ENCODE measurements at regions of chr16 and their contacts with region 1.

Region 1: DNA sequence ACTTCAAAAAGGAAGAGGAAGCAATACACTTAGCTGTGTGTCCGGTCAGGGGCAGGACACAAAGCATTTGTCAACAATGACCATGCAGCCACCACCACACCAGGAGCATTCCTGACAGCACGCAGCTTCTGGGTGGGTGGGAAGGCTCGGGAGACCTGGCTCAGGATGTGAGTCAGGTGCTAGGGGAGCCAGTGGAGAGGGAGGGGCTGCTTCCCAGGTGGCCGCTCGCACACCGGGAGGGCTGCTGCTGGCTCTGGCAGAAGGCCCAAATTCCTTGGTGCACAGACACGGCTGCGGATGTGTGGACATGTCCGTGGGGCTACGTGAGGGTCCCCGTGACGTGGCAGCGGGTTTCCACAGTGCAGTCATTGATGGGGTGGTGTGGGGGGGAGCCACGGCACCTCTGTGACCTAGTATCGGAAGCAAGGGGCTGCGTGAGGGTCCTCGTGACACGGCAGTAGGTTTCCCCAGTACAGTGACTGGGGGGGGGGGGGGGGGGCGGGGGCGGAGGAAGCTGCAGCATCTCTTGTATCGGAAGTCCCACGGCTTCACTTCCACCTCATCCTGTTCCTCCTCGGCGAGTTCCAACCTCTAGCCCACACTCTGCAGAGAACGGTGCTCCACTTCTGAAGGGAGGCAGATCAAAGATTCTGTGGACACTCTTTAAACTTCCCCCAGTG is 112.8 kb downstream of the ZNF778 start:
- DNase-seq: peak; percentile 94
- ATAC-seq: peak; percentile 83
- H3K4me3 ChIP-seq: peak overlapping the region; percentile 48; the same call in 1 of the 2 replicates
- H3K27ac ChIP-seq: peak overlapping the region; percentile 88
- H3K4me1 ChIP-seq: peaks cover 66% of the 10 kb centered on the region
- H3K27me3 ChIP-seq: no peaks in the 10 kb centered on the region
- CTCF ChIP-seq: no peak

Region 2: DNA sequence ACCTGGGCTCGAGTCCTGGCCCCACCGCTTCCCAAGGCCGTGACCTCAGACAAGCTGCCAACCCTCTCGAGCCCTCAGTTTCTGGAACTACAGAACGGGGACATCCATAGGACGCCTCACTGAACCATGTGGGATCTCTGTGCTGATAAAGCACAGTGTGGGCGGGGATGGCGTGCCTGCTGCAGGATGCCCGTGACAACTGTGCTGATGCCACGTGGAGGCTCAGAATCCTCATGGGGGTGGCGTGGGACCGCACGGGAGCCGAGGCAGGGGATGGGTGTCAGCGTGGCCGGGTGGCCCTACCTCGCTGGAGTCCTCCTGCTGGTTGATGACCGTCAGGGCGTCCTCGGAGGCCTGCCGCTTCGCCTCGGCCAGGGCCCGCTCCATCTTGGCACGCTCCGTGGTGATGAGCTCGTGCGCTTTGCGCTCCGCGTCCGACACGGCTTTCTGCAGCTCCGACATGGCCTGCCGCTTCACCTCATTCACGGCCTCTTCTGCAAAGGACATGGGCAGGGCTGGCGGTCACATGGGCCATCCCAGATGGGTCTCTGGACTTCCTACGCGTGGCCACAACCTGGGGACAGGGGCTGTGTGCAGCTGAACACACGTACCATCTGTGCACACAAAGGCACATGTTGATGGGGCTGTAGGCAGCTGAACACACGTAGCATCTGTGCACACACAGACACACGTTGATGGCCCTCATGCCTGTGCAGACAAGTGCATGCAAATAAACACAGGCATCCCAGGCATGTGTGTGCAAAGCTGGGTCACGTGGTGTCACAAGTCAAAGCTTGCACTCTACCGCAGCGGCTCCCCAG is 451.1 kb before region 1 on chr16:
- CTCF ChIA-PET with region 1: no interaction called
- POLR2A ChIA-PET with region 1: no interaction called
- intact Hi-C with region 1: no loop called
- DNase-seq: no peak
- ATAC-seq: no peak
- H3K4me3 ChIP-seq: no peak overlapping the region
- H3K27ac ChIP-seq: no peak overlapping the region
- H3K4me1 ChIP-seq: peaks cover 6% of the 10 kb centered on the region; the same call in 1 of the 2 replicates
- H3K27me3 ChIP-seq: no peaks in the 10 kb centered on the region
- CTCF ChIP-seq: no peak

Region 3: DNA sequence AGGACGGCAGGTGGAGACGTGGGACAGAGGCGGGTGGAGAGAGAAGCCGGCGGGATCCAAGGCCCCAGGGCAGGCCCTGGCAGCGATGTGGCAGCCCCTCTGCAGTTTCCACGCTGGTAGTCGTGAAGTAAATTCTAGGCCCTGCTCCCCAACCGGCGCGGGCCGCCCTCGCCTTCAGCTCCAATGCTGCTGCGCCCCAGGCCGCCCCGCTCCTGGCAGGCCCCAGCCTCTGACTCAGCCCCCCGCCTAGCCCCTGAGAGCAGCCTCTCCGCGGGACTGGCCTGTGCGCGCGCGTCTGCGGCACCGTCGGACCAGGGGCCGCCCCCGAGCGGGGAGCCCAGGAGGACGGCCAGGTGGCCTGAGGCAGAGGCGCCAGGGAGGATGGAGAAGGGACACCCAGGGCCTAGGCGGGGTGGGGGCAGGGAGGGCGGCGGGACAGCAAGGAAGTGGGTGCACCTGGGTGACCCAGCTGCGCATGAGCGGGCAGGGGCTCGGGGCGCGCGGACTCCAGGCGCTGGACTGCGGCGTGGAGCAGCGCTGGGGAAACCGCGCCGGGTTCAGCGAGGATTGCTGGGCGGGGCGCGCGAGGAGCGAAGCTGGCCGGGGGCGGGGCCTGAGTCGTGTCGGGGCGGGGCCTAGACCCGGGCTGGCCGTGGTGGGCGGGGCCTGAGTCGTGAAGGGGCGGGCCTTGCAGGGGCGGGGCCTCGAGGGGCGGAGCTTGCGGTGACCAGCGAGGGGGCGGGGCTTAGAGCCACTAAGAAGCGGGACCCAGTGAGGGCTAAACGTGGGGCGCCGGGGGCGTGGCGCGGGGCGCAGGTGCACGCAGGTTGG is 83.2 kb before region 1 on chr16:
- CTCF ChIA-PET with region 1: no interaction called
- POLR2A ChIA-PET with region 1: interaction called, 16 read pairs
- intact Hi-C with region 1: no loop called
- DNase-seq: peak; percentile 78
- ATAC-seq: peak; percentile 89
- H3K4me3 ChIP-seq: peak overlapping the region; percentile 73
- H3K27ac ChIP-seq: peak overlapping the region; percentile 64
- H3K4me1 ChIP-seq: no peaks in the 10 kb centered on the region
- H3K27me3 ChIP-seq: no peaks in the 10 kb centered on the region
- CTCF ChIP-seq: 0 out of 2 replicates have a peak, but pooled peaks have one; percentile 20

Region 4: DNA sequence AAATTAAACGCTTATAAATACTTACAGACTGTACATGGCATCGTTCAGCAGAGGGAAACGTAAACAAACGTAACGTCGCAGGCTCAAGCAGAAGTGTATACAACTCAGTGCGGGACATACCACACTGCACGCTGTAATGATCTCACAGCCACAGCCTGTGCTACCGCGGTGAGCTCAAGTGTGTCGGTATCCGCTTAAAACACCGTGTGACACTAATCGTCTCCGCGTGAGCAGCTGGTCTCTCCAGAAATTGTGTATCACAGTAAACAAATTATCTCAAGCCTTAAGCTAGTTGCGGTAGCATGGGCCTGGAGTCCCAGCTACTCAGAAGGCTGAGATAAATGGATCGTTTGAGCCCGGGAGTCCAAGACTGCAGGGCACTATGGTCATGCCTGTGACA is 44.7 kb after region 1 on chr16:
- CTCF ChIA-PET with region 1: no interaction called
- POLR2A ChIA-PET with region 1: no interaction called
- intact Hi-C with region 1: loop called (anchors 5 kb)
- DNase-seq: peak; percentile 34
- ATAC-seq: peak; percentile 70
- H3K4me3 ChIP-seq: peak overlapping the region; percentile 67
- H3K27ac ChIP-seq: peak overlapping the region; percentile 72
- H3K4me1 ChIP-seq: peaks cover 27% of the 10 kb centered on the region
- H3K27me3 ChIP-seq: no peaks in the 10 kb centered on the region
- CTCF ChIP-seq: no peak

Region 5: DNA sequence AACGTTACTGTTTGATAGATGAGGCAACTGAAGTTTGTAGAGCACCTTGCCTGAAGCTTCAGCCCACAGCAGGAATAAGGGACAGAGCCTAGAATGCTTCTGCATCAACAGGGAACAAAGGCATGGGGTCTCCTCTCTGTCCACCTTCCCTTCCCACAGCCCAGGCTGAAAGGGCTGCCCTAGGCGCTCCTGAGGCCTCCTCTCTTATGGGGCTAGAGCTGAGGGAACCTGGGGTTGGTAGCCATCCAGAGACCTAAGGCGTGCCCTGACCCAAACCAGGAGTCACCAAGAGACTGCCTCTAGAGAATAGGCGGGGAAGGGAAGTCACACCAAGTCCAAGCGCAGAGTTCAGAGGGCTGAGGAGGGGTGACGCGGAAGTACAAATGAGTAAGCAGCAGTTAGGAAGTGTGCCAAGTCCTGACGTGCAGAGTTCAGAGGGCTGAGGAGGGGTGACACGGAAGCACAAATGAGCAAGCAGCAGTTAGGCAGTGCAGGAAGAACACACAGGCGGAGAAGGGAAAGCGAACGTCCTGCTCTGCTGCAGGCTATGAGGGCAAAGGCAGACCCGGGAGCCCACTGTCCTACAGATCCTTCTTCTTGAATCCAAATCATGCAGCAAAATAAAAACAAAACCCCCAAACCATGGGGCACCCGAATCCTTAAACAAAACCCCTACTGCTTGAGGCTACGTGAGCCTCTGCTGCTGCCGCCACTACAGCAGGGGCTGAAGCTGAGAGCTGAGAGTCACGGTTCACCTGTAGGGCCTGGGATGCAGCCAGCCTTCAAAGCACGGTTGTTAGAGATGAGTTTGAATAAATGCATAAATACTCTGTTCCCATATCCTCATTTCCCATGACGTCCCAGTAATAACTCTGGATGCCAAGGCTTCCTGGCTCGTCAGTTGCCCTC is 175.1 kb after region 1 on chr16:
- CTCF ChIA-PET with region 1: no interaction called
- POLR2A ChIA-PET with region 1: interaction called, 16 read pairs
- intact Hi-C with region 1: no loop called
- DNase-seq: peak; percentile 90
- ATAC-seq: peak; percentile 32
- H3K4me3 ChIP-seq: peak overlapping the region; percentile 23; the same call in 1 of the 2 replicates
- H3K27ac ChIP-seq: peak overlapping the region; percentile 89
- H3K4me1 ChIP-seq: peaks cover 39% of the 10 kb centered on the region
- H3K27me3 ChIP-seq: no peaks in the 10 kb centered on the region
- CTCF ChIP-seq: no peak